ENCODE measurements at regions of chr7 and their contacts with region 1.

Region 1: DNA sequence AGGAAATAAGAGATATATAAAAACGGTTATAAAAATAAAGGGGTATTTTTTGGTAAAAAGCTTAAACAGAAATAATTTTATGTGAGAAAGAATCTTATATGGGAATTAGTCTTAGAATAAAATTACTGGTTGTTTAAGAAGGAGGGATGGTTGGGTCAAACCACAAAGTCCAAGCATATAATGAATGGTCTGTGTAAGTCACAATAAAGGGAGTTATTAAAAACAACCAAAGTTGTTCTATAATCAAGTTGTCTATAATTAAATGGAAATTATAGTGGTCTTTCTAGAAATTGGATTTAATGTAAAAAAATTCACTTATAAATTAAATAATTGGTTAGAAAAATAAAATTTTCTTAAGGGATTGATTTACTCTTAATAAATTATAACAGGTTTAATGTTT is 304.8 kb downstream of the POM121L12 start:
- DNase-seq: no peak
- ATAC-seq: no peak

Region 2: DNA sequence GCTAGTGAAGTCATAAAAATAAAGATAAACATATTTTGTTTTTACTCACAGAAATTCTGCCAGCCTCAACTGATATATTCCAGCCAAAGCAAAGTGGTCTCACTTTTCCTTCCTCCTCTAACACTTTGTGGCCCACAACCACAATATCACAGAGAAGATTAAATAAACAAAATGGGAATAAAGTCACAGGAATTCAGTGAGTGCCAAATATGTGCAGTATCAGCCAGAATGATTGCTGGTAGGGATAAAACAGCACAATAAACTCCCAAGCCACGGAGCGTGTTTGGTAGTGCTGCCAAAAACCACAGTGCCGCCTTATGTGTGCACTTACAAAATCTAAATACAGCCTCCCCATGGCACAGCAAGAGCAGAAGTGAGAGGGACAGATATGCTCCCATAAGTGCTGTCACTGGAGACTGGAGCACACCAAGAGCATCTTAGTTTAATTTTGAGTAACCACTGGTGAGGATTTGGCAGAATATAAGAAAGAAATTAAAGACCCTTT is 149.0 kb before region 1 on chr7:
- intact Hi-C with region 1: no loop called
- DNase-seq: no peak
- ATAC-seq: no peak

Region 3: DNA sequence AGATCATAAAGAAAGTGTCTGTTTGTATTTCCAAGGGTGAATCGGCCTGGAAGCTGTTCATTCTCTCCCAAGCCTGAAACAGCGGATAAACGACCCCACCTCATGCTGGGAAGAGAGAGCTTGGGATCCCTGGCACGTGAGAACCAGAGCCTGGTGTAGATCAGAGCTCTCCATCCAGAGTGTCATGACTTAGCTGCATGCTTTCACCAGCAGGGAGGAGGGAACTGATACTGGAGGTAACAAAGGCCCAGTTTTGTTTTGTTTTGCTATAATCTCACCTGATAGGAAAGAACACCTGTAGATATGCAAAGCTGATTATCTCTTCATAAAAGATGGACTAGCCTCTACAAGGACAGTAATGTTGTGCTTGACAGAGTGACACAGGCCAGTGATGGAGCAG is 68.1 kb before region 1 on chr7:
- intact Hi-C with region 1: no loop called
- DNase-seq: no peak
- ATAC-seq: no peak

Region 4: GRCh38 chr7:53358269-53358668 is 18.0 kb after region 1 on chr7:
- intact Hi-C with region 1: loop called (anchors 2 kb)
- DNase-seq: no peak
- ATAC-seq: no peak

Measured in sciatic nerve (tissue), 2 donors.